ENCODE measurements at regions of chr10 and their contacts with region 1.

Region 1: GRCh38 chr10:70363971-70364771 is 18.3 kb downstream of the LRRC20 start:
- DNase-seq: peak; percentile 74
- ATAC-seq: peak; percentile 99
- H3K4me3 Mint-ChIP-seq: peak overlapping the region; percentile 24
- H3K27ac Mint-ChIP-seq: no peak overlapping the region
- H3K4me1 Mint-ChIP-seq: peaks cover 15% of the 10 kb centered on the region
- H3K27me3 Mint-ChIP-seq: peaks cover 2% of the 10 kb centered on the region
- CTCF ChIP-seq: peak; percentile 25

Region 2: GRCh38 chr10:70227548-70228320 is 136.4 kb before region 1 on chr10:
- CTCF ChIA-PET with region 1: interaction called, 373 read pairs
- POLR2A ChIA-PET with region 1: interaction called, 26 read pairs
- intact Hi-C with region 1: loop called (anchors 2 kb)
- DNase-seq: no peak
- ATAC-seq: no peak
- H3K4me3 Mint-ChIP-seq: no peak overlapping the region
- H3K27ac Mint-ChIP-seq: no peak overlapping the region
- H3K4me1 Mint-ChIP-seq: peaks cover 16% of the 10 kb centered on the region
- H3K27me3 Mint-ChIP-seq: no peaks in the 10 kb centered on the region
- CTCF ChIP-seq: no peak

Region 3: GRCh38 chr10:70267161-70267933 is 96.8 kb before region 1 on chr10:
- CTCF ChIA-PET with region 1: interaction called, 204 read pairs
- POLR2A ChIA-PET with region 1: interaction called, 6 read pairs
- intact Hi-C with region 1: loop called (anchors 1 kb)
- DNase-seq: no peak
- ATAC-seq: peak; percentile 31
- H3K4me3 Mint-ChIP-seq: no peak overlapping the region
- H3K27ac Mint-ChIP-seq: no peak overlapping the region
- H3K4me1 Mint-ChIP-seq: peaks cover 8% of the 10 kb centered on the region
- H3K27me3 Mint-ChIP-seq: peaks cover 13% of the 10 kb centered on the region
- CTCF ChIP-seq: no peak

Region 4: DNA sequence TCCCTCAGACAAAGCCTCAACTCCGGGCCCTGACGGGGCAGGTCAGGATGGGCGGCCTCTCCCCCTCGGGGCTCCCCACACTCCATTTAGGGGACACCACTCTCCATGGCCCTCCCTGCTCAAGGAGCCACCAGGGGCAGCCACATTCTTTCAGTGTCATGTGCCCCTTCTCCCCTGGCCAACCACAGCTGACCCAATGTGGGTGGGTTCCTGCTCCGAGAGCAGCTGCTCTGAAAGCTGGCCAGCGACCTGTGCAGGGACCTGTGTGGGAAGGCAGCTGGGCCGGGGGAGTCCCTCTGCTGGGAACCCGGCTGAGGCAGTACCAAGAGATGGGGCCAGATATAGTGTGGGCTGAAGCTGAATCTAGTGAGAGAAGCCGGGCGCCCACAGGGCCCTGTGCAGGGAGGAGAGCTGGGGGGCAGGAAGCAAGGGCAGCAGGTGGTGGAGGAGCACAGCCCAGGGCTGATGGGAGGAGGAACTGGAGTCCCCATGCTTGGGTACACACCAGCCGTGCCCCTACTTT is 39.8 kb before region 1 on chr10:
- CTCF ChIA-PET with region 1: interaction called, 4 read pairs
- POLR2A ChIA-PET with region 1: no interaction called
- intact Hi-C with region 1: loop called (anchors 5 kb)
- DNase-seq: no peak
- ATAC-seq: peak; percentile 77
- H3K4me3 Mint-ChIP-seq: no peak overlapping the region
- H3K27ac Mint-ChIP-seq: no peak overlapping the region
- H3K4me1 Mint-ChIP-seq: peaks cover 27% of the 10 kb centered on the region
- H3K27me3 Mint-ChIP-seq: peaks cover 9% of the 10 kb centered on the region
- CTCF ChIP-seq: no peak